ENCODE measurements at regions of chr17 and their contacts with region 1.

Region 1: DNA sequence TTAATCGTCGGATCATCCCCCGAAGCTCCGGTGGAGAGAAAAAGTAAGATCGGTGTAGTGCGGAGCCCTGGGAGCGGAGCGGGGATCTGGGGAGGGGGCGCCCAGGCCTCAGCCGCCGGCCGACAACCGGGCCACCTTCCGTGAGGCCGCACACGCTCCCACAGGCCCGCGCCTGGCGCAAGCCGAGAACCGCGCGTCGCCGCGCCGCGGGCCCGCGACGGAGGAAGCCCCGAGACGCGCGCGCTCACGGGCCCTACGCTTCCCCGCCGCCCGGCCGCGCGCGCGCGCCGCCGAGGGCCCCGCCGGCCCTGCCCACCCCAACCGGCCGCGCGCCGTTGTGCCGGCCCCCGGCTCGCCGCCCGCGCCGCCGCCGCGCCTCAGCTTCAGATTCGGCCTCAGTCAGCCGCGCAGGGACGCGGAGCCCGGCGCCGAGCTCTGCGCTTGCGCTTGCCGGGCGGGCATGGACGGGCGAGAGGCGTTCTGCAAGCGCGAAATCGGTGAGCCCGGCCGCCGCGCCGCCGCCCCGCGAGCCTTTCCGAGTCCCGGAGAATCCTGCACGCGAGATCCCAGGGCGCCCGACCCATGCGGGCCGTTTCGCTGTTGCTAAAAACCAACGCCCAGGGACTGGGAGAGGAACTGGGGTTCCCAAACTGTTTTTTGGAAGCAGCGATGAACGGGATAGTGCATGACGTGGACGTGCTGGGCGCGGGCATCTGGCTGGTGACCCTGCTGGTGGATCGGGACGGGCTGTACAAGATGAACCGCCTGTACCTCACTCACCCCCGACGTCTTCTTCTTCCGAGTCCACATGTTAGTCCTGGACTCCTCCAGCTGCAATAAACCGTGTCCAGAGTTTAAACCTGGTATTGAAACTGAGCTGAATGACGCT is 28.0 kb upstream of the LRRC37A start:
- DNase-seq: peak; percentile 96
- H3K4me3 ChIP-seq: peak overlapping the region; percentile 75
- H3K27ac ChIP-seq: peak overlapping the region; percentile 55
- H3K4me1 ChIP-seq: peaks cover 28% of the 10 kb centered on the region
- H3K27me3 ChIP-seq: peaks cover 5% of the 10 kb centered on the region; the same call in 1 of the 2 replicates

Region 2: GRCh38 chr17:45841883-45842525 is 424.9 kb before region 1 on chr17:
- in situ Hi-C with region 1: loop called (anchors 25 kb)
- DNase-seq: no peak
- H3K4me3 ChIP-seq: no peak overlapping the region
- H3K27ac ChIP-seq: no peak overlapping the region
- H3K4me1 ChIP-seq: no peaks in the 10 kb centered on the region
- H3K27me3 ChIP-seq: peaks cover 26% of the 10 kb centered on the region; the same call in 1 of the 2 replicates

Measured in GM23248 (cell line).